ENCODE measurements at regions of chr18 and their contacts with region 1.

Region 1: DNA sequence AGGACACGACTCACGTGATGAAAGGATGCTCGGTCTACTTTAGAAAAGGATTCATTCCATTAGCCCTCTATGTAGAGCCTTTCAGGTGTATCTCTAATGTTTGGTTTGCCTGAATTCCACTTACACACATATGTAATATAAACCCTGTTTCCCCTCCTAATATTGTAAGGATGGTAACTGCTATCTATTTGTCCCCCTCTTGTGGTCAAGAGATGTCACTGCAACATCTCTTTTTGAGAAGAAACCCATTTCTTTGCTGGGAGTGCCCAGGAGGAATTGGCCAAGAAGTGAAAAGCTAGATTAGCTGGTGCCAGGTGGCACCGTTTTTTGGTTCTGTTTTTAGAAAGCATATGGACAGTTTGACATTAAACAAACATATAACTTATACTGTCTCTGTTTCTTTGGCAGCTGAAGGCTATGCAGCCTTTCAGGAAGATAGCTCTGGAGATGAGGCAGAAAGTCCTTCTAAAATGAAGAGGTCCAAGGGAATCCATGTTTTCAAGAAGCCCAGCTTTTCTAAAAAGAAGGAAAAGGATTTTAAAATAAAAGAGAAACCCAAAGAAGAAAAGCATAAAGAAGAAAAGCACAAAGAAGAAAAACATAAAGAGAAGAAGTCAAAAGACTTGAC is 41.2 kb downstream of the RALBP1 start:
- DNase-seq: peak; percentile 8
- H3K4me3 Mint-ChIP-seq: no peak overlapping the region
- H3K27ac Mint-ChIP-seq: no peak overlapping the region
- H3K4me1 Mint-ChIP-seq: no peaks in the 10 kb centered on the region
- H3K27me3 Mint-ChIP-seq: no peaks in the 10 kb centered on the region

Region 2: DNA sequence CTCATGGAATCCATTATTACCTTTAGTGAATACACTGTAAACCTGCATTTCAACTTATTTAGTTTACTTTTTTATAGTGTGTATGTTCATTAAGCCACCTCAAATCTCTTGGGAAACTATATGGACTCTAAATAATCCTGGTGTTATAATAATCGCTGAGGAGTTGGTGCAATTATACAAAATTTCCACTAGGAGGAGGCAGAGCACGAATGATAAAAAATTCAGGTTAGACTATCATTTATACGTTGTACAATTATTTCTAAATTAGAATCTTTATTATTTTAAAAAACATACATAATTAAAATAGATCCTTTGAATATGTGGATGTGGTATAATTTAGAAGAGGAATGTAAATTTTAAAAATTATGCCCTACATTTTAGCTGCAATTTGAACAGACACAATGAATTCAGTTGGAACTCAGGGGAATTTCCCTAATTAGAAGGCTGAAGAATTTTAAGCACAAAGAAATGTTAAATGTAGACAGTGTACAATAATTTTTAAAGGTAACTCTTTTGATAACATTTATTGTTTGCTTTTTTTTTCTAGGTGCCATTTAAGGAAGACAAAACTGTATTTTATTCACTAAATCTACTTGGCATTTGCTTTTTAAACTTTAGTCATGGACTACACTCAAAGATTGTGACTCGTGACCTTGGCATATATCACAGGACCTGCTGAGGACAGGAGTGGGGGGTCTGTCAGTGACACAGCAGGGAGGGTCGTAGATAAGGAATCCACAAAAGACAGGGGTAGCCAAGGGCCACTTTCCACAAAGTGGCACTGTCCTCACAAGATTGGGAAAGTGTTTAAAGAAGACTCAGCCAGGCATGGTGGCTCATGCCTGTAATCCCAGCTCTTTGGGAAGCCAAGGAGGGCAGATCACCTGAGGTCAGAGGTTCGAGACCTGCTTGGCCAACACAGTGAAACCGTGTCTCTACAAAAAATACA is 861.8 kb before region 1 on chr18:
- CTCF ChIA-PET with region 1: no interaction called
- intact Hi-C with region 1: loop called (anchors 1 kb)
- DNase-seq: no peak
- H3K4me3 Mint-ChIP-seq: no peak overlapping the region
- H3K27ac Mint-ChIP-seq: no peak overlapping the region
- H3K4me1 Mint-ChIP-seq: no peaks in the 10 kb centered on the region
- H3K27me3 Mint-ChIP-seq: peaks cover 7% of the 10 kb centered on the region

Region 3: DNA sequence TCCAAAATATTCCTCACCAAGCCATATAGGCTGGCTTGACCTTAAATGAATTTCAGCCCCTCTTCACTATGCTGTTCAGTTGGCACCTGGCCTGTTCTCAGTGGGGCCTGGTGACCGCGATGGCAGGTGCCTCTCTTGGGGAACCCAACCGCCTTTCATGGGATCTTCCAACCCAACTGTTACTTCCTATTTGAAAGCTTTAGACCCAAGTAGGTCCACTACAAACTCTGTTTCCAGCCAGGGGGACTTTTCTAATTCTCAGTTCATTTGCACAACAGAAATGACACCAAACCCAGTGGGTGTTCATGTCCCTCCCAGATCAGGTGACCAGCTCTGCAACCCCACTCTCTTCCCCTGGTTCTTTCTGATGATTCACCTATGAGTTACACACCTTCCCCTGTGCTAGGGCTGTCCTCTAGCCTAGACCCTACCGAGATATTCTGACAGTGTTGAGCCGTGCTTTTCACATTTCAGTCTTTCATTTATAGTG is 449.7 kb before region 1 on chr18:
- CTCF ChIA-PET with region 1: interaction called, 25 read pairs
- intact Hi-C with region 1: no loop called
- DNase-seq: no peak
- H3K4me3 Mint-ChIP-seq: no peak overlapping the region
- H3K27ac Mint-ChIP-seq: no peak overlapping the region
- H3K4me1 Mint-ChIP-seq: peaks cover 8% of the 10 kb centered on the region
- H3K27me3 Mint-ChIP-seq: peaks cover 5% of the 10 kb centered on the region

Region 4: DNA sequence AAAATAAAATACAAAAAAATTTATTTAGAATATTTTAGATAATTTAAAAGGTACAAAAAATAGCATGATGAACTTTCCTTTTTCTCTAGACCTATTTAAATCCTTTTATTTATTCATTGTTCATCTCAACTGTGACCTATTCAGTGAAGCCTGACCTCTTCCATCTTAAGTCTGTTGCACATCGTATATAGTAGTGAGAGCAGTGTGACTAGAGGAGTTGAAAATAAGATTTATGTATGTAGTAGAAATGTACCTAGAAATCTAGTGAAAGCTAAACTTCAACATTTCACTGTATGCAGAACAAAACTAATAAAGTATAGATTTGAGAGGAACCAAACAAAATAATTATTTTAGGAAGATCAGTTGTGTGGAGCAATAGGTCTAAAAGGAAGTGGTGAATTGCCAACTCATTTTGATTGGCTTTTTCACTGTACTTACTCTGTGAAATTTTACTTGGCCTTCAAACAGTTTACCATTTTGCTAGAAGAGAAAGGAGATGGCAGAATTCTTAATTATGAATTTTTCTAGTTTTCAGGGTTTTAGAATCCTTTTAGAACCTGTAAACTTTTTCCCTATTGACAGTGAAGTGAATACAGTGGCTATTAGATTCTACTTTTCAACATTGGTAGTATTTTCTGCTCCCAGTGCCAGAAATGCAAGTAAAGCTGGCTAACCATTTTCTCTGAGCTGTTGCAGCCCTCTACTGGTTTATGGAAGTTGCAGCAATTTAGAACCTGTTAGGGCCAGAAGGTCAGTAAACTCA is 368.9 kb before region 1 on chr18:
- CTCF ChIA-PET with region 1: interaction called, 4 read pairs
- intact Hi-C with region 1: loop called (anchors 2 kb)
- DNase-seq: peak; percentile 42
- H3K4me3 Mint-ChIP-seq: no peak overlapping the region
- H3K27ac Mint-ChIP-seq: peak overlapping the region; percentile 76
- H3K4me1 Mint-ChIP-seq: peaks cover 73% of the 10 kb centered on the region
- H3K27me3 Mint-ChIP-seq: no peaks in the 10 kb centered on the region

Region 5: GRCh38 chr18:9404565-9405060 is 111.9 kb before region 1 on chr18:
- CTCF ChIA-PET with region 1: interaction called, 3 read pairs
- intact Hi-C with region 1: loop called (anchors 10 kb)
- DNase-seq: peak; percentile 68
- H3K4me3 Mint-ChIP-seq: peak overlapping the region; percentile 70
- H3K27ac Mint-ChIP-seq: peak overlapping the region; percentile 57
- H3K4me1 Mint-ChIP-seq: peaks cover 10% of the 10 kb centered on the region
- H3K27me3 Mint-ChIP-seq: no peaks in the 10 kb centered on the region